WTC11 (cell line): ENCODE measurements at regions of chr19 and their contacts with region 1.

Region 1: GRCh38 chr19:10027158-10027693 is 13.9 kb downstream of the RDH8 start:
- DNase-seq: no peak
- ATAC-seq: no peak
- H3K4me3 Mint-ChIP-seq: peak overlapping the region; percentile 36
- H3K27ac Mint-ChIP-seq: no peak overlapping the region
- H3K4me1 Mint-ChIP-seq: peaks cover 8% of the 10 kb centered on the region
- H3K27me3 Mint-ChIP-seq: peaks cover 13% of the 10 kb centered on the region
- CTCF ChIP-seq: no peak

Region 2: DNA sequence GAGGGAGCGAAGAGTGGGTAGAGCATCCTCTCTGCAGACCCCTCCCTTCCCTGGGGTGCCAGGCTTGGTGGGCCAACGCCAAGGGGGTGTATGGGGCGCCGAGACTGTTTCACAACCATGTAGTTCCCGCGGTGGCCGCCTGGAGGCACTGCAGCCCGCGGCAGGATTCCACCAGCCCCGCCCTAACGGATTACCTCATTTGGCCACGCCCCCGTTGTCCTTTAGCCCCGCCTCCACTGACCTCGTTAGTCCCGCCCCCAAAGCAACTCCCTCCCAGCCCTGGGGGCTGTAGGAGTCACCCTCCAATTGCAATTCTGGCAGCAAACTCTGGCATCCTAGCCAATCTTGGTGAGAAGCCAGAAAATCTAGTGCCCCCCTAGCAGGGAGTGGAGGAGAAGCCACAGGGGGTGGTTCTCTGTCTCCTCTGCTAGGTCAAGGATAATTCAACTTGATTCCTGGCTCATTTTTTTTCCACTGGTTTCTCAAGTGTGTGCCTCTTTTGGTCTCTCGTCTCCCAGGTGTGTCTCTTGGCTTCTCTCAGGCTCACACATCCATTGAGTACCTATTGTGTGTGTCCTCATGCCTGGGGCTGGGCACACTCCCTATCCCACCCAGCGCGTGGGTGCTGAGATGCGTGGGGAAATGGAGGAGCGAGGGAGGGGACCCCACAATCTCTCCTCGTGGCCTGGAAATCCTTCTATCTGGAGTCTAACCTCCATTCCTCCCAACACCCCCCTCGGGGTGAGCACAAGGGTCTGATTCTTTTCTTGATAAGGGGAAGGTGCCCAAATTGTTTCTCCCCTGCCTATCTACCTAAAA is 92.9 kb before region 1 on chr19:
- CTCF ChIA-PET with region 1: interaction called, 64 read pairs
- POLR2A ChIA-PET with region 1: no interaction called
- DNase-seq: peak; percentile 96
- ATAC-seq: peak; percentile 71
- H3K4me3 Mint-ChIP-seq: peak overlapping the region; percentile 91
- H3K27ac Mint-ChIP-seq: peak overlapping the region; percentile 97
- H3K4me1 Mint-ChIP-seq: peaks cover 24% of the 10 kb centered on the region
- H3K27me3 Mint-ChIP-seq: no peaks in the 10 kb centered on the region
- CTCF ChIP-seq: peak; percentile 96

Region 3: DNA sequence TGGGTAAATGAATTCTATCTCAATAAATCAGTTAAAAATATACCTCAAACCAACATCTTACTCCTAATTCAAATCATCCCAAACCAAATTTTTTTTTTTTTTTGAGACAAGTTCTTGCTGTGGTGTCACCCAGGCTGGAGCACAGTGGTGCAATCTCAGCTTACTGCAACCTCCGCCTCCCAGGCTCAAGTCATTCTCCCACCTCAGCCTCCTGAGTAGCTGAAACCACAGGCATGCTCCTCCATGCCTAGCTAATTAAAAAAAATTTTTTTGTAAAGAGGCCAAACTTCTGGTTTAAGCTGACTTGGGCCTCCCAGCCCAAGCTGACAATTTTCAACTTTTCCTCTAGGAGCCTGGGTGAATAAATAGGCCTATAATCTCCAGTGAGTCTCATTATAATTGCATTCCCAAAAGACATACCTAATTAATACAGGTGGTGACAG is 68.8 kb before region 1 on chr19:
- CTCF ChIA-PET with region 1: interaction called, 18 read pairs
- POLR2A ChIA-PET with region 1: no interaction called
- DNase-seq: no peak
- ATAC-seq: no peak
- H3K4me3 Mint-ChIP-seq: no peak overlapping the region
- H3K27ac Mint-ChIP-seq: no peak overlapping the region
- H3K4me1 Mint-ChIP-seq: peaks cover 12% of the 10 kb centered on the region; the same call in 1 of the 2 replicates
- H3K27me3 Mint-ChIP-seq: peaks cover 5% of the 10 kb centered on the region
- CTCF ChIP-seq: no peak

Region 4: GRCh38 chr19:9986787-9987281 is 40.4 kb before region 1 on chr19:
- CTCF ChIA-PET with region 1: interaction called, 14 read pairs
- POLR2A ChIA-PET with region 1: no interaction called
- DNase-seq: no peak
- ATAC-seq: peak; percentile 60
- H3K4me3 Mint-ChIP-seq: no peak overlapping the region
- H3K27ac Mint-ChIP-seq: no peak overlapping the region
- H3K4me1 Mint-ChIP-seq: peaks cover 7% of the 10 kb centered on the region
- H3K27me3 Mint-ChIP-seq: no peaks in the 10 kb centered on the region; the same call in 1 of the 2 replicates
- CTCF ChIP-seq: no peak

Region 5: DNA sequence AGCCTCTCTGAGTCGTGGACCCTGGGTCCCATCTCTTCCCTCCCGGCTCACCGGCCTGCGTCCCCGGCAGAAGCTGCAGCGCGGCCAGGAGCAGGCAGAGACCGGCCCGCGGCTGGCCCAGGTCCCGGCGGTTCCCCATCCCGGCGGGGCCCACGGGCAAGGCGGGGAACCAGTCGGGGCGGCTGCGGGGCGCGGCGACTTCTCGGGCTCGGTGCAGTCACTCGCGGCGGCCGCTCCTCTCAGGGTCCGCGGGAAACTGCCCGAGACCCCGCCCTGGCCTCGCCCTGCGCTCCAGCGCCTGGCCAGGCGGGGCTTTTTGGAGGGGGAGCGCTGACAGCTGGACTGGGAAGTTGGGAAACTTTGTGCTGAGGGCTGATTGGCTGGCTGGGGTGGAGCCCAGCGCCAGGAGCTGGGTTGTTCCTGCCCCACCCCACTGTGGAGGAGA is 17.0 kb before region 1 on chr19 and contains the start of gene COL5A3:
- CTCF ChIA-PET with region 1: interaction called, 20 read pairs
- POLR2A ChIA-PET with region 1: interaction called, 4 read pairs
- DNase-seq: peak; percentile 49
- ATAC-seq: peak; percentile 76
- H3K4me3 Mint-ChIP-seq: peak within 1 kb of the TSS; percentile 61
- H3K27ac Mint-ChIP-seq: no peak within 1 kb of the TSS
- H3K4me1 Mint-ChIP-seq: peaks cover 10% of the 10 kb centered on the region
- H3K27me3 Mint-ChIP-seq: peaks cover 63% of the 10 kb centered on the region
- CTCF ChIP-seq: no peak
- total RNA-seq, gene COL5A3: 0.81 to 1.2 TPM (median 0.96 TPM) in 3 replicates

Region 6: DNA sequence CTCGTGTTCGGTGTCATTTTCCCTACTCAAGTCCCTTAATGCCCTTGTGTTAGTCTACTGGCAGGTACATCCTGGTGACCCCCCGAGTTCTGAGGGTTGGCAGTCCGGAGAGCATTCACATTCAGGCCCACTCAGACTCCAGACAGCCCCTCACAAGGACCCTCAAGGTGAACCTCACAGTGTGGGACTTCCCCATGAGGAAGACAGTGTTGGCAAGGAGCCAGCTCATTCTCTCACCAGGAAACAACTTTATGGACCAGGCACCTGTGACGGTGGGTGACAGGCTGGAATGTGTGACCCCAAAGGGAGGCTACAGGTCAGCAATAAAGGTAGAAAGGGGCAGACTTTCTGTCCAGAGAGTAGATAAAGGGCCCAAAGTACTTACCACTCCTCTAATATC is 10.6 kb after region 1 on chr19:
- CTCF ChIA-PET with region 1: no interaction called
- POLR2A ChIA-PET with region 1: no interaction called
- DNase-seq: no peak
- ATAC-seq: no peak
- H3K4me3 Mint-ChIP-seq: no peak overlapping the region
- H3K27ac Mint-ChIP-seq: no peak overlapping the region
- H3K4me1 Mint-ChIP-seq: peaks cover 6% of the 10 kb centered on the region
- H3K27me3 Mint-ChIP-seq: peaks cover 45% of the 10 kb centered on the region
- CTCF ChIP-seq: no peak

Region 7: DNA sequence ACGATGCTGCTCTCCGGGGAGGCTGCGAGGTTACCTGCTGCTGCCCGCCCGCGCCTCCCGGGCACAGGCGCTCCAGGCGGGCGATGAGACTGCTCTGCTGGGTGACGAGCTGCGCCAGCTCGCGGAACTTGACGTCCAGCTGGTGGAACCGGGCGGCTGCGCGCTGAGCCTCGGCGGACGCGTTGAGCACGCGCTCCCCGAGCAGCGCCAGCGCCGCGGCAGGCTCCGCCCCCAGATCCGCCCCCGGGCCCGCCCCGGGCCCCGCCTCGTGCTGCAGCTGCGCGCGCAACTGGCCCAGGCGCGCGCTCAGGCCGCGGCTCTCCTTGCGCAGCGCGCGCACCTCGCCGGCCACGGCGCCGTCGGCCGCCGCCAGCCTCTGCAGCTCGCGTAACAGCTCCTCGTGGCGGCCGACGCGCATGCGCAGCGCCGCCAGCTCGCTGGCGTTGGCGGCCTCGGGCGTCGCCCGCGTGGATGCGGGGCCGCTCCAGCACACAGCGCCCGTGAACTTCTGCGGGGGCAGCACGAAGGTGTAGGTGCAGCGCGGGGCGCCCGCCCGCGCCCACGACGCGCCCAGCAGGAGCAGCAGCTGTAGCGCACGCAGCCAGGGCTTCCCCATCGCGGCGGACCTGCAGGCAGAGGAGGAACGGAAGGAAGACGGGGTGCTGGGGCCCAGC is 68.9 kb after region 1 on chr19:
- CTCF ChIA-PET with region 1: interaction called, 13 read pairs
- POLR2A ChIA-PET with region 1: interaction called, 3 read pairs
- DNase-seq: peak; percentile 87
- ATAC-seq: peak; percentile 87
- H3K4me3 Mint-ChIP-seq: peak overlapping the region; percentile 42
- H3K27ac Mint-ChIP-seq: no peak overlapping the region
- H3K4me1 Mint-ChIP-seq: peaks cover 2% of the 10 kb centered on the region; the same call in 1 of the 2 replicates
- H3K27me3 Mint-ChIP-seq: peaks cover 62% of the 10 kb centered on the region
- CTCF ChIP-seq: no peak

Region 8: DNA sequence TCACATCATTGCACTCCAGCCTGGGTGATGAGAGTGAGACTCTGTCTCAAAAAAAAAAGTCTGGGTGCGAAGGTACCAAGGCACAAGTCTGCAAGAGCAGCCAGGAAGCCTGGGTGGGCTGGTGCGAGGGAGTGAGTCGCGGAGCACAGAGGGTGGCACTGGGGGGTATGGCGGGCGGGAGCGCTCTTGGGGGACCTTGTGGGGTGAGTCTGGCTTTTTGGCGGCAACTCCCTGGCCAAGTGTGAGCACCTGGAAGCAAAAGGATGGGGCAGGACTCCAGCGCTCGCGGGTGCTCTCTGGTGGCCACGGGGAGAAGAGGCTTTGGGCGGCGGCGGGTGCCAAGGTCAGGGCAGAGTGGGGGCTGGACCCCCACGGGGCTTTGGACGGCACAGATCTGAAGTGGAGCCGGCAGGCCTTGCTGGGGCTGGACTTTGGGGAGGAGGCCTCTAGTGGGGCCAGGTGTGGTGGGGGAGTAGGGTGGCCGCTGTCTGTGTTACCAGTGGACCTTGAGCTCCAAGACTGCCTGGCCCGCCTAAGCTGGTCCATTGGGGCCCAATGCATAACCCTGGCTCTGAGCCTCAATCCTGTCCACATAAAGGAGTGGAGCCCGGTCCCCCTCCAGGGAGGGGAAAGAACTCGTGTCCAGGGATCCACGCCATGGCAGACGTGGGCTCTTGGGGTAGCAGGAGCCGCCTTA is 85.8 kb after region 1 on chr19:
- CTCF ChIA-PET with region 1: interaction called, 12 read pairs
- POLR2A ChIA-PET with region 1: no interaction called
- DNase-seq: peak; percentile 86
- ATAC-seq: peak; percentile 58
- H3K4me3 Mint-ChIP-seq: no peak overlapping the region
- H3K27ac Mint-ChIP-seq: no peak overlapping the region
- H3K4me1 Mint-ChIP-seq: peaks cover 7% of the 10 kb centered on the region; the same call in 1 of the 2 replicates
- H3K27me3 Mint-ChIP-seq: no peaks in the 10 kb centered on the region
- CTCF ChIP-seq: peak; percentile 55

Region 9: GRCh38 chr19:10126213-10126639 is 99.0 kb after region 1 on chr19:
- CTCF ChIA-PET with region 1: no interaction called
- POLR2A ChIA-PET with region 1: no interaction called
- DNase-seq: no peak
- ATAC-seq: no peak
- H3K4me3 Mint-ChIP-seq: no peak overlapping the region
- H3K27ac Mint-ChIP-seq: no peak overlapping the region
- H3K4me1 Mint-ChIP-seq: no peaks in the 10 kb centered on the region
- H3K27me3 Mint-ChIP-seq: no peaks in the 10 kb centered on the region
- CTCF ChIP-seq: no peak